ENCODE measurements at regions of chr7 and their contacts with region 1.

Region 1: DNA sequence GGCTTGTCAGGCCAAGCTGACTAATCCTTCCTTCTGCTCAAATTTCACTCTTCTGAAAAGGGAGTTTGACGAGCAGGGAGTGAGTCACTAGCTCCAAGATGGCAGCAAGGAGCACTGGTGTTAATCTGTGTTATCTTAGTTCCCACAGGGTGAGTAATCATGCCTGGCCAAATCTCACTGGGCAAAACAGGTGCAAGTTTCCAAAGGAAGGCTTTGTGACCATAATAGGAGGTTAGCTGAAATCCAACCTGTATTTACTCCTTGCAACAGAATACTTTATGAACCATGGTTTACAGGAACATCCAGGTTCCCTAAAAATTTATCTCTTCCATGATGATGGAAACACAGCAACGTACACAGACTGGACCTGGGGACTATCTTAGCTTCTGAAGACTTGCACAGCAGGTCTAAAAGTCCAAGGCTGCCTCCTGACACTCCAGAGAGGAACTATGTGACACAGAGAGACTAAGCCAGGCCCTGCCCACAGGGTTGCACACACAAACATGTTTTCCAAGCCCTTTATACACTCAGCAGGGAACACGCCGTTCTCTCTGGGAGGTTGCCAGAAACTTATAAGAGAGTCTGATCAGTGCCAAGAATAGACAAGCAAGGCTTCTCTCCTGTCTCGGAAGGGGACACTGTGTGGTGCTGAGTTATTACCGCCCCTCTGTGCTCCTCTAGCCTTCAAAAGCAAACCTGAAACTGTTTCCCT is 46.3 kb downstream of the PDK4 start:
- DNase-seq: peak; percentile 92

Region 2: GRCh38 chr7:95501261-95501832 is 48.6 kb before region 1 on chr7:
- intact Hi-C with region 1: no loop called
- DNase-seq: no peak

Region 3: GRCh38 chr7:95589031-95589430 is 39.1 kb after region 1 on chr7:
- intact Hi-C with region 1: loop called in 1 of 2 experiments (anchors 5 kb)
- DNase-seq: no peak